H1 (cell line): ENCODE measurements at regions of chr18 and their contacts with region 1.

Region 1: DNA sequence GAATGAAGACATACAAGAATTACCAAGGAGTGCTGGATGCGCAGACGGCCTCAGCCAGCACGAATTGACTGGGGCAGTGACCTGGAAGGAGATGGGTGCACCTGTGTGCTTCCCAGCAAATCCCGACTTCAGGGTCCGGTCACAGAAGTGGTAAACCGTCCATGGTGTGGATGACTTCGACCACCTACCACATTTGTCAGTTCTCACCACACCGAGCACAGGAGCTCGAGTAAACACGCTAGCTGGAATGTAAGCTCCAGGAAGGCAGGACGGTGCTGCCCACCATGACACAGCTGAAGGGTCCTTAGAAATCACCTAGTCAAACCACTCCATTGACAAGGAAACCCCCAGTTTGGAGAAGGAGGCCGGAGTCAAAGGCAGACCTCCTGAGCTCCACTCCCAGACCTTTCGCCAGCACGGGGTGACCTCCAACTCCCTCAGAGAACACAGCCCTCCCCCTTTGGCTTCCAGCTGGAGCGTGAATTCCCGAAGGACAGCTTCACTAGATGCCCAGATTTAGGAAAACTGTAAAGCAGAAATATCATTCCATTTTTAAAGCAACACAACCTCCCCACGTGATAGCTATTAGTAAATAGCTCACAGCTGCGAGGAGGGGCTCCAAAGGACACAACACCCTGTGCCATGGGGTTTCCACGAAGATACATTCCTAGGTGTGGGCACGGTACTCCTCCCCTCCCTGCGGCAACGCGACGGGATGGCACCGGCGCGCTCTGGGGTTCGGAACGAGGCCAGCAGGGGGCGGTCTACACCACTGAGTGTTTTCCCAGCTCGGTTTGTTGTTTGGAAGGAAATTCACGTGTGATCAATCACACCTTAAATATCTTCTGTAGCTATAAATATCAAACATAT is 34.1 kb upstream of the GNAL start:
- DNase-seq: peak; percentile 13 to 94
- H3K4me3 ChIP-seq: peak overlapping the region in 2 of 4 experiments; percentile 10 to 35; a peak in 3 of 8 replicates
- H3K27ac ChIP-seq: no peak overlapping the region
- H3K4me1 ChIP-seq: no peaks in the 10 kb centered on the region
- H3K27me3 ChIP-seq: peaks cover 0 to 8% (median 3%) of the 10 kb centered on the region in 4 experiments; a peak in 4 of 7 replicates
- CTCF ChIP-seq: peak; percentile 84 to 96 (median 88)
- EP300 ChIP-seq: no peak
- POLR2A ChIP-seq: no peak
- RAD21 ChIP-seq: peak; percentile 90 to 92

Region 2: DNA sequence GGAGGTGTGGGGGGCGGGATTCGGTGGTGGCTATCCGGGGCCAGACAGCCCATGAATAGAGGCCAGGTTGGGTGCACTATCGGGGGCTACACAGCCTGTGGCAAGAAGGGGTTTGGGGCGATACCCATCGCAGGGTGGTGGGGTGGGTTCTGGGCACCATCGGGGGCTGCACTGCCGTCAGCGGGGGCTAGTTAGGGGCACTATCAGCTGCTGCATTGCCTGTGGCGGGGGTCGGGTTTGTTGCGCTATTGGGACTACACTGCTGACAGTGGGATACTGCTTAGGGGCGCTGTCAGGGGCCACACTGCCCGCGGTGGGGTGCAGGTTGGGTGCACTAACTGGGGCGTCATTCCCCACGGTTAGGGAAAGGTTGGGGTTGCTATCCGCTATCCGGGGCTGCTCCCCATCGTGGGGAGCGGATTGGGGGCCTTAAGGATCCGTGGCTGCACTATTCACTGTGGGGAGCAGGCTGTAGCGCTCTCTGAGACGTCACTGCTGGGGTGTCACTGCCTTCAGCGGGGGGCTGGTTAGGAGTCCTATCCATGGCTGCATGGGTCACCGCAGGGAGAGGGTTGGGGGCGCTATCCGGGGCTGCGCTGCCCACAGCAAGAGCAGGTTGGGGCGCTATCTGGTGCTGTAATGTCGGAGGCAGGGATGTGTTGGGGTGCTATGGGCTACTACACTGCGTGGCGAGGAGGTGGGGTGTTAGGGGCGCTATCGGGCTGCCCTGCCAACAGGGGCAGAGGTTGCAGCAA is 122.0 kb before region 1 on chr18:
- CTCF ChIA-PET with region 1: no interaction called
- POLR2A ChIA-PET with region 1: no interaction called
- DNase-seq: no peak
- H3K4me3 ChIP-seq: no peak overlapping the region
- H3K27ac ChIP-seq: no peak overlapping the region
- H3K4me1 ChIP-seq: no peaks in the 10 kb centered on the region
- H3K27me3 ChIP-seq: no peaks in the 10 kb centered on the region; a peak in 1 of 7 replicates
- CTCF ChIP-seq: no peak
- EP300 ChIP-seq: no peak
- POLR2A ChIP-seq: no peak
- RAD21 ChIP-seq: no peak; a peak in 1 of 4 replicates

Region 3: DNA sequence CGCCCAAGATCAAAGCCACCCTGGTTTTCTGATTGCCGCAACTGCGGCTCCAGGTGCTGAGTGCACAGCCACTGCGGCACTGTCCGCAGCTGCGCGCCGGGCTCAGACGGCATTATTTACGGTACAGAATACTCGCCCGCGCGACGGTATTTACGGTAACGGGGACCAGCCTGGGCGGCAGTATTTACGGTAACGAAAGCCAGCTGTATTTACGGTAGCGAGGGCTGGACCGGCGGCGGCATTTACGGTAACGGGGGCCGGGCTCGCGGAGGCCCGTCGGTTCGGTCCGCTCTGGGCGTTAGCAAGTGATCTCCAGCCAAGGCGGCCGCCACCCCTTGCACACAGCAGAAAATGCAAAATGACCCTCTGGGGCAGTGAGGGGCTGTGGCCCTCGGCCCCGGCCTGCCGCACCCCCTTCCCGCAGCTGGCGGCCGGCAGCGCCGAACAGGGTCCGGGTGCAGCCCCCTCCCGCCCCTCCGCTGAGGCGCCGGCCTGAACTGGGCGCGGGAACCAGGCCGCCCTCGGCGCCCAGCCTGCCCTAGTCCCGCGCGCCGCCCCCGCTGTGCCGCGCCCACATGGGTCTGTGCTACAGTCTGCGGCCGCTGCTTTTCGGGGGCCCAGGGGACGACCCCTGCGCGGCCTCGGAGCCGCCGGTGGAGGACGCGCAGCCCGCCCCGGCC is 34.2 kb after region 1 on chr18 and contains the start of gene GNAL:
- CTCF ChIA-PET with region 1: interaction called, 19 read pairs
- POLR2A ChIA-PET with region 1: no interaction called
- DNase-seq: peak; percentile 75 to 89
- H3K4me3 ChIP-seq: peak within 1 kb of the TSS; percentile 53 to 78 (median 62)
- H3K27ac ChIP-seq: no peak within 1 kb of the TSS
- H3K4me1 ChIP-seq: no peaks in the 10 kb centered on the region; a peak in 1 of 7 replicates
- H3K27me3 ChIP-seq: peaks cover 0 to 11% (median 4%) of the 10 kb centered on the region in 4 experiments; a peak in 3 of 7 replicates
- CTCF ChIP-seq: no peak
- EP300 ChIP-seq: peak; percentile 22 to 87
- POLR2A ChIP-seq: no peak
- RAD21 ChIP-seq: peak in 1 of 2 experiments; percentile 36; a peak in 1 of 4 replicates
- total RNA-seq, gene GNAL: 18.2 and 18.3 TPM in 2 replicates

Region 4: GRCh38 chr18:11719621-11720020 is 64.7 kb after region 1 on chr18:
- CTCF ChIA-PET with region 1: interaction called, 109 read pairs
- POLR2A ChIA-PET with region 1: no interaction called
- DNase-seq: no peak
- H3K4me3 ChIP-seq: no peak overlapping the region
- H3K27ac ChIP-seq: no peak overlapping the region
- H3K4me1 ChIP-seq: peaks cover 0 to 3% (median 0%) of the 10 kb centered on the region in 4 experiments; a peak in 1 of 7 replicates
- H3K27me3 ChIP-seq: no peaks in the 10 kb centered on the region
- CTCF ChIP-seq: no peak
- EP300 ChIP-seq: no peak
- POLR2A ChIP-seq: no peak
- RAD21 ChIP-seq: no peak

Region 5: DNA sequence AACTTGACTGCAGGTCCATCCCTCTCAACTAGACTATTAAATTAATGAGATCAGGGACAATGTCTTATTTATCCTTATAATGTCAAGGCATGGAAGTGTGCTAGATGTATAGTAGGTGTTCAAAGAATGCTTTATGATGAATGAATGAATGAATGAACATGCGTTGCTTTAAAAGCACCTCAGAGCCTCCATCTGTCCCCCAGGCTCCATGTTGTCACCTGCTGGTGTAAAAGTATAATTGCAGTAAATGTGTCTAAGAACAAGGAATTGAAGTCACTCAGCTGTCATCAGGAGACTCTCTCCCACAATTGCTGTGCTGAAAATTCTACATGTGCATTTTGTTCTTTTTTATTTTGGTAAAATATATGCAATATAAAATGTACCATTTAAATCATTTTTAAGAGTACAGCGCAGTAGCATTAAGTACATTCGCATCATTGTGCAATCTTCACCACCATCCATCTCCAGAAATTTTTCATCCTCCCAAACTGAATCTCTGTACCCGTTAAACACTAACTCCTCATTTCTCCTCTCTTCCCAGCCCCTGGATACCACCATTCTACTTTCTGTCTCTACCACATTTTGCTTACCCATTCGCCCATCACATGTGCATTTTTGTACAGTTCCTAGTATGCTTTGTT is 86.7 kb after region 1 on chr18:
- CTCF ChIA-PET with region 1: interaction called, 65 read pairs
- POLR2A ChIA-PET with region 1: no interaction called
- DNase-seq: no peak
- H3K4me3 ChIP-seq: no peak overlapping the region
- H3K27ac ChIP-seq: no peak overlapping the region
- H3K4me1 ChIP-seq: peaks cover 2 to 7% (median 5%) of the 10 kb centered on the region in 4 experiments; a peak in 5 of 7 replicates
- H3K27me3 ChIP-seq: no peaks in the 10 kb centered on the region
- CTCF ChIP-seq: peak in 2 of 3 experiments; percentile 59 to 67; a peak in 3 of 4 replicates
- EP300 ChIP-seq: no peak
- POLR2A ChIP-seq: no peak
- RAD21 ChIP-seq: peak; percentile 60 to 68